Motor neuron (in vitro differentiated cells): ENCODE measurements at regions of chr1 and their contacts with region 1.

Region 1: DNA sequence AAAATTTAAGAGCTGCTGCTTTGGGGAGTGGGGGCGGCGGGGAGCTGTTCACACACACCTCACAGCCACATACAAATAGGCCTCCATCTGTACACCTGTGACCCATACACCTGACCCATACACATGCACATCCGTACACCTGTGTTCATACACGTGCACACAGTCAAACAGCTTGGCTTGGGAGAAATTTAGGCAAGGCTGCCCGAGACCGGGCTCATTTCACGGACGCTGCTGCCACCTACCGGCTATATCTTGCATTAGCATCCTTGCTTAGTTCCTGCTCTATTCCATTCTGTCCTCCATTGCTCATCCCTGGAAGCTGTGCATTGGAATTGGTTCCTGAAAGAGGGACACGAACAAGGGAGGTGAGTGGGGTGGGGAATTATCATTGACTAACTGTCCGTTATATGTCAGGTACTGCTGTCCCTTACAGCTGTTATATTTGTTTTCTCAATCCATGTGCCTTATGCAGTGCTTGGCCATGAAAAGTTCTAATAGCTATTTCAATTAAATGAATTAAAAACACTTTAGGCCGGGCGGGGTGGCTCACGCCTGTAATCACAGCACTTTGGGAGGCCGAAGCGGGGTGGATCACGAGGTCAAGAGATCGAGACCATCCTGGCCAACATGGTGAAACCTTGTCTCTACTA is 37.1 kb upstream of the EPB41 start:
- ATAC-seq: peak; percentile 75 to 85 (median 81)
- H3K4me3 ChIP-seq: no peak overlapping the region
- H3K27ac ChIP-seq: no peak overlapping the region
- H3K4me1 ChIP-seq: no peaks in the 10 kb centered on the region

Region 2: DNA sequence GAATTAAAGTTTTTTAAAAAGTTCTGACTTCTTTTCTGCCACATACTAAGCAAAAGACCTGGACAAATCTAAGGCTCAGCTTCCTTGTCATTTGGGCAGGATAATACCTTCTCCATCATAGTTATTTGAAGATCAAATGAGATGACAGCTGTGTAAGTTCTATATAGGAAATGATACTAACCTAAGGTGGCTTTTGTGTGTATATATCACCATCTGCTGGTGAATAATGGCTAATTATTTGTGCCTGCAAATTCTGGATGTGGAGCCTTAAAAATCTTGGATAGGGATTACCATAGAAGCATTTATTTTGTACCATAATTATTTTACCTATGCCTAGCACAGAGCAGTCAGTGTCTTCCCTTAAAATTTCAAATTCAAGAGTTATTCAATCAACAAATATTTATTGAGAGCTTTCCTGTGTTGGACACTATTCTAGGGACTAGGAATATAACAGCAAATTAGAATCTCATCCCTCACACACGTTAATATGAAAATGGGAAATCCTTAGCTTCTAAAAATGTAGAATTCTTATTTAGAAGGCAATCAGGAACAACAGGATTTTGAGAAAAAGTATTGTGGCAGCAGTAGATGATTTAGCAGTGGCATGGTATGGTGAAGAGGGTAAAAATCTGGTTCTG is 156.7 kb after region 1 on chr1:
- in situ Hi-C with region 1: loop called in 5 of 9 experiments (anchors 5 to 25 kb)
- ATAC-seq: peak; percentile 28 to 56 (median 44)
- H3K4me3 ChIP-seq: no peak overlapping the region
- H3K27ac ChIP-seq: no peak overlapping the region
- H3K4me1 ChIP-seq: peaks cover 4 to 9% of the 10 kb centered on the region in 2 donors

Region 3: DNA sequence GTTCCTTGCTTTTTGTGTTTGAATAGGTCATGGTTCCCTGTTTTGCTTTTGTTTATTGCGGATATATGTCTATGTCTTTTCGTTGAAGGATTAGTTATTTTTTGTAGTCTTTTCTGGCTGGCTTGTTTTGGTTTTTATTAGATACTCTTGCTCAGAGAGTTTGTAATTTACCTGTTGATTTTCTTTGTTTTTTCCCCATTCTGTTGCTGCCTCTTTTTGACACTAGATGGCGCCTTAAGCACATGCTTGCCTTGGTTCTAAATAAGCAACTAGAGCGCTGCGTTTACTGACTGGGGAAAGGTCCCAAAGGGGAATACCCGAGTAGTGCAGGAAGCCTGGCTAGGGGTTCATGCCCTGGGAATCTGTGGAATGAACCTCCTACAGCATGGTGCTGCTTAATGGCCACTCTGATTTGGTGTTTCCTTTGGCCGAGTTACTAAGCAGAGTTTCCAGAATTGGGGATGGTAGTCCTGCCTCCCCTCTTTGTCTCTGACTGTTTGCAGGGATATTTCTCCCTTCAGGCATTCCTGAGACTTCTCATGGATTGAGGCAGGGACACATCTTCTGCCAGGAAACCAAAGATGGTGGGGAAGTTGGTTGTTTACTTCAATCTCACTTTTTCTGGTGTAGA is 502.3 kb after region 1 on chr1:
- in situ Hi-C with region 1: no loop called
- ATAC-seq: peak in 3 of 8 experiments; percentile 36 to 48 (median 42)
- H3K4me3 ChIP-seq: no peak overlapping the region
- H3K27ac ChIP-seq: no peak overlapping the region
- H3K4me1 ChIP-seq: peaks cover 0 to 10% of the 10 kb centered on the region in 2 donors